CD8-positive, alpha-beta T cell (primary cell): ENCODE measurements at regions of chr1 and their contacts with region 1.

Region 1: DNA sequence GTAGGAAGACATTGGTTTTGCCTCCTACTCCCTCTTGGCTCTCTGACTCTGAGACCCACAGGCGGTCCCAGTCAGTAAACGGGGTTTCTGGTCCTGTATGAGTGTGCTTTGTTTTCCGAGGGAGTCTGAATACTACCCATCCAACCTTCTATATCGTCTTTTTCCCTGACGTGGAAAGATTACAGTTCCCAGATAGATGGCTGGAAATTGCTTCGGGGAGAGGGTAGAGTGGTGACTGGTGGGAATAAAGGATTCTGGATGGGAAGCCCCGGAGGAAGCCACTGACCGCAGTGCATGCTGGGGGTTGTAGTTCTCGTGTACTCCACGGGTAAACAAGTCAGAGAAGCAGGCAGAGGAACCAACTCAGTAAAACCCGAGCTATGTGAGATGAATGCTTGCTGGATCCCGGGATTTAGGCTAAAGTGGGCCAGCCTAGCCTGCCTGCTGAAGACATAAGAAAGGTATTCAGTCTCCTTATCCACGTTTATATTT is 66.2 kb upstream of the IRF2BP2 start:
- DNase-seq: peak in 8 of 9 experiments; percentile 23 to 74 (median 58)
- ATAC-seq: peak; percentile 80
- H3K4me3 ChIP-seq: peak overlapping the region; percentile 35 to 60
- H3K4me3 Mint-ChIP-seq: peak overlapping the region; percentile 80
- H3K27ac ChIP-seq: no peak overlapping the region
- H3K27ac Mint-ChIP-seq: peak overlapping the region; percentile 60
- H3K4me1 ChIP-seq: peaks cover 8% of the 10 kb centered on the region
- H3K4me1 Mint-ChIP-seq: peaks cover 11% of the 10 kb centered on the region
- H3K27me3 ChIP-seq: no peaks in the 10 kb centered on the region
- H3K27me3 Mint-ChIP-seq: no peaks in the 10 kb centered on the region
- CTCF ChIP-seq: no peak

Region 2: DNA sequence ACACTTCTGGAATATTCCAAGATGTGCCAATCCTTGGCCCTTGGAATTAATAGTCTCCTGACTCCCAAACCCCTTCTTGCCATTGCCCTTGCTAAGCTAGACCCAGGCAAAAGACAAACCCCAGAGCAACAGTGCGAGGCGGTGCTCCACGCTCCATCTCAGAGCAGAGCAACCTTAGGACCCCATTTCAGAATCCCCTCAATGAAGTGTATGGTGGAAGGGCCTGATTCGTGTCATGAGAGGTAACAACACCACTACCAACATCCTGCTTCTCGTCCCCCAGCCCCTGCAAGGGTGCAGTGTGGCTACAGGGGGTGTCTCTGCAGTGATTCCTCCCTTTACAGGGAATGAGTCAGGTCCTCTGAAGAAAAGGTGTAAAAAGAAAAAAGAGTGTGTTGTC is 37.7 kb after region 1 on chr1:
- CTCF ChIA-PET with region 1: no interaction called
- POLR2A ChIA-PET with region 1: no interaction called
- intact Hi-C with region 1: loop called in 1 of 2 experiments (anchors 1 kb)
- DNase-seq: no peak
- ATAC-seq: no peak
- H3K4me3 ChIP-seq: no peak overlapping the region
- H3K4me3 Mint-ChIP-seq: no peak overlapping the region
- H3K27ac ChIP-seq: no peak overlapping the region
- H3K27ac Mint-ChIP-seq: no peak overlapping the region
- H3K4me1 ChIP-seq: no peaks in the 10 kb centered on the region
- H3K4me1 Mint-ChIP-seq: peaks cover 3% of the 10 kb centered on the region
- H3K27me3 ChIP-seq: no peaks in the 10 kb centered on the region
- H3K27me3 Mint-ChIP-seq: no peaks in the 10 kb centered on the region
- CTCF ChIP-seq: no peak